Left colon (tissue), 2 donors: ENCODE measurements at regions of chr18 and their contacts with region 1.

Region 1: GRCh38 chr18:79156327-79156726 is 87.1 kb downstream of the ATP9B start:
- DNase-seq: peak; percentile 20 to 43
- ATAC-seq: peak; percentile 84

Region 2: GRCh38 chr18:79092874-79093273 is 63.5 kb before region 1 on chr18:
- intact Hi-C with region 1: loop called in 1 of 2 experiments (anchors 10 kb)
- DNase-seq: no peak
- ATAC-seq: no peak

Region 3: GRCh38 chr18:79317718-79318117 is 161.4 kb after region 1 on chr18:
- intact Hi-C with region 1: no loop called
- DNase-seq: no peak
- ATAC-seq: no peak